Ovary (tissue), 10 donors: ENCODE measurements at regions of chr18 and their contacts with region 1.

Region 1: GRCh38 chr18:52093171-52093570 is 246.8 kb upstream of the DCC start:
- DNase-seq: no peak
- H3K4me3 ChIP-seq: no peak overlapping the region
- H3K27ac ChIP-seq: no peak overlapping the region
- H3K4me1 ChIP-seq: no peaks in the 10 kb centered on the region
- H3K27me3 ChIP-seq: no peaks in the 10 kb centered on the region
- CTCF ChIP-seq: no peak
- EP300 ChIP-seq: no peak
- POLR2A ChIP-seq: no peak

Region 2: DNA sequence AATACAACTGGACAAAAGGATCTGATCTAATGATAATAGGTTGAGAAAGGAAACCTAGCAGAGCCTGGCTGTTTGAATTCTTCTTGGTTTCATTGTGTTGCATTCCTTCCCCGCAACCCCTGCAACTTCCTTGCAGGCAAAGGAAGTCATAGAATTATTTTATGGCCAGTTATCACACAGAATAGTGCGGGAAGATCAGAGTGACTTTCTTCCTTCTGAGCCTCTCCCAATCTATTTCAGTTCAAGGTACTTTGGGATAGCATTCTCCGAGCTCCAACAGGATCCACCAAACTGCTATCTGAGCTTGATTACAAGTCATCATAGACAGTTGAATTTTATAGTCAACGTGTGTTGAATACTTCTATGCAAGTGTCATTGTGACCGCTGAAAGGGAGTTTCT is 687.9 kb after region 1 on chr18:
- intact Hi-C with region 1: loop called in 1 of 4 experiments (anchors 5 kb)
- DNase-seq: no peak
- H3K4me3 ChIP-seq: no peak overlapping the region
- H3K27ac ChIP-seq: no peak overlapping the region
- H3K4me1 ChIP-seq: no peaks in the 10 kb centered on the region
- H3K27me3 ChIP-seq: no peaks in the 10 kb centered on the region
- CTCF ChIP-seq: no peak
- EP300 ChIP-seq: no peak
- POLR2A ChIP-seq: no peak